Panc1 (cell line): ENCODE measurements at regions of chr9 and their contacts with region 1.

Region 1: DNA sequence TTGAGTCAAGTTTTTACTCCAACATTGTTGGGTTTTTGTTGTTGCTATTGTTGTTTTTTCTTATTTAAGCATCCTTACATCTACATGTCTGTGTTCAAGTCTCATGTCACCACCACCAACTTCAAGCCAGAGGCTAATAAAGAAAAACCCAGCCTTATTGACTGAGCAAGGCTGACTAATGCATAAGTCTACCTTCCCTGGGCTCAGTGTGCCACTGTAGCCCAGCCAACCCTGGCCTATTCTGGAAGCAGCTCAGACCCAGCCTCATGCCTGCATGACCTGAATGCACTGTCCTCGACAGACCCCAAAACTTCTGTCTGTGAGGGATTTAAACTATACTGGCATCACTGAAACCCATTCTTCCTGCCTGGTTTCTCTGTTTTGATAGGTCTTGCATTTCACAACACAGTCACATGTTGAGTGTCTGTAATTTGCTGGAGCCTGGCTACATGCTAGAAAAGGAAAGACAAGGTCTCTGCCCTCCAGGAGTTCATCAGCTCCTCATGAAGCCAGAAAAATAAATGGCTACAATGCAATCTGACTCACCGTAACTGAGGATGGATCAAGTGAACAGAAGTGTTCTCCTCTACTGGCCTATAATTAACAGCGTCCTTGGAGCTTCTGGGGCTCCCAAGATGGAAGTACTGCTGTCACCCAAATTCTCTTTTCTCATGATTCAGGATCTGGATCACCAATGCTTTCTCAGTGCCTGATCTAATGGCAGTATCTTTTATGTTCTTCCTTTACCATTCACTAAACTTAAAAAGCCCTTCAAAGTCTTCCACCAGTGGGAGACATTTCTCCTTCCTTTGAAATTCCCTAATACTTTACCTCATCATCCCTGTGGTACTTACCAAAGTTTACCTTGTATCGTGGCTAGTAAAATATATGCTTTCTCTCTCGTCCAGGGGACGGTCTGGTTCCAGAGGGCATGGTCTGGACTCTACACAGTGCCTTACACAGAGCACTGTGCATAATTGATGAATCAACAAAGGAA is 103.9 kb upstream of the IFNE start:
- DNase-seq: no peak
- ATAC-seq: no peak
- H3K4me3 ChIP-seq: no peak overlapping the region
- H3K27ac ChIP-seq: peak overlapping the region; percentile 100
- H3K4me1 ChIP-seq: peaks cover 92% of the 10 kb centered on the region
- H3K27me3 ChIP-seq: no peaks in the 10 kb centered on the region
- CTCF ChIP-seq: peak; percentile 64

Region 2: DNA sequence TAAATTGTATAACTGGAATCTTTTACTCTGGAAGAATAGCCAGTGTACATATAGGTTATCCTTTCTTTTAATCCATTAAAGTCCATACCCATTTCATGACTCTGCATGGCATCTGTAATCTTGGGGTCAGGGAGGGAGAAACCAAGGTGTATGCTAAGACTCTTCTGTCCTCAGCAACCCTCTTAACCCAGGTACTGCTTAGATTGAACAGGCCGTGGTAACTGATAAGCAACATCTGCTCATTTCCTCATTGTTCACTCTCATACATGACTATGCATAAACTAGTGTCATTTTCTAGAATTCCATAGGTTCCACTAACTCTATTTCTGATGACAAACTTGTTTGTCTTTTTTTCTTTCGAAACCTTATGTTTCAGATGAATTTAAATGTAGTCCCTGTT is 34.7 kb before region 1 on chr9:
- CTCF ChIA-PET with region 1: no interaction called
- POLR2A ChIA-PET with region 1: interaction called, 3 read pairs
- in situ Hi-C with region 1: no loop called
- intact Hi-C with region 1: loop called (anchors 5 kb)
- DNase-seq: no peak
- ATAC-seq: 0 out of 2 replicates have a peak, but pooled peaks have one; percentile 15
- H3K4me3 ChIP-seq: peak overlapping the region; percentile 3 to 34; a peak in 2 of 4 replicates
- H3K27ac ChIP-seq: peak overlapping the region; percentile 99
- H3K4me1 ChIP-seq: peaks cover 90% of the 10 kb centered on the region
- H3K27me3 ChIP-seq: no peaks in the 10 kb centered on the region
- CTCF ChIP-seq: no peak